MCF 10A (cell line): ENCODE measurements at regions of chr2 and their contacts with region 1.

Region 1: GRCh38 chr2:206800506-206801417 is 35.4 kb downstream of the FASTKD2 start:
- DNase-seq: peak; percentile 84
- H3K4me3 Mint-ChIP-seq: no peak overlapping the region
- H3K27ac Mint-ChIP-seq: no peak overlapping the region
- H3K4me1 Mint-ChIP-seq: no peaks in the 10 kb centered on the region
- H3K27me3 Mint-ChIP-seq: no peaks in the 10 kb centered on the region
- CTCF ChIP-seq: peak; percentile 76

Region 2: GRCh38 chr2:206274434-206275268 is 526.1 kb before region 1 on chr2 and contains the start of gene ZDBF2:
- CTCF ChIA-PET with region 1: no interaction called
- POLR2A ChIA-PET with region 1: no interaction called
- intact Hi-C with region 1: no loop called
- DNase-seq: peak; percentile 52
- H3K4me3 Mint-ChIP-seq: peak within 1 kb of the TSS; percentile 76
- H3K27ac Mint-ChIP-seq: peak within 1 kb of the TSS; percentile 89
- H3K4me1 Mint-ChIP-seq: no peaks in the 10 kb centered on the region
- H3K27me3 Mint-ChIP-seq: no peaks in the 10 kb centered on the region
- CTCF ChIP-seq: no peak
- total RNA-seq, gene ZDBF2: 15.6 and 21.3 TPM in 2 replicates

Region 3: GRCh38 chr2:206408323-206409320 is 392.1 kb before region 1 on chr2:
- CTCF ChIA-PET with region 1: no interaction called
- POLR2A ChIA-PET with region 1: no interaction called
- intact Hi-C with region 1: no loop called
- DNase-seq: no peak
- H3K4me3 Mint-ChIP-seq: no peak overlapping the region
- H3K27ac Mint-ChIP-seq: no peak overlapping the region
- H3K4me1 Mint-ChIP-seq: no peaks in the 10 kb centered on the region
- H3K27me3 Mint-ChIP-seq: no peaks in the 10 kb centered on the region
- CTCF ChIP-seq: no peak

Region 4: DNA sequence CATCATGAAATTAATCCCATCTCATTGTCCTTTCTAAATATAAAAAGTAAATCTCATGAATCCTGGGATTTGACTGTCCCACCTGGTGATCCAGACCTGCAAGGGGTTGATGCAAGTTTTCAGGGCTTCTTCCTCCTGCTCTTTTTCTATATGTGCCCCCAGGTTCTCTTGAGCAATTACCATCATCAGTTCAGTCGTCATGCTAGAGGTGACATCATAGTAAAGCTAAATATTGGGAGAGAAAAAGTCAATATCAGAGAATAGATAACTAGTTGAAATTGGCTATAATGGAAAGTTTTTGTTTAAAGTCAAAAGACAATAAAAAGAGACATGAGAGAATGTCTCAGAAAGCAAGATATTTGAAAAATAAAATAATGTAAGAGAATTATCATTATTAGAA is 43.9 kb before region 1 on chr2:
- CTCF ChIA-PET with region 1: no interaction called
- POLR2A ChIA-PET with region 1: no interaction called
- intact Hi-C with region 1: no loop called
- DNase-seq: no peak
- H3K4me3 Mint-ChIP-seq: no peak overlapping the region
- H3K27ac Mint-ChIP-seq: no peak overlapping the region
- H3K4me1 Mint-ChIP-seq: no peaks in the 10 kb centered on the region
- H3K27me3 Mint-ChIP-seq: peaks cover 5% of the 10 kb centered on the region
- CTCF ChIP-seq: no peak

Region 5: DNA sequence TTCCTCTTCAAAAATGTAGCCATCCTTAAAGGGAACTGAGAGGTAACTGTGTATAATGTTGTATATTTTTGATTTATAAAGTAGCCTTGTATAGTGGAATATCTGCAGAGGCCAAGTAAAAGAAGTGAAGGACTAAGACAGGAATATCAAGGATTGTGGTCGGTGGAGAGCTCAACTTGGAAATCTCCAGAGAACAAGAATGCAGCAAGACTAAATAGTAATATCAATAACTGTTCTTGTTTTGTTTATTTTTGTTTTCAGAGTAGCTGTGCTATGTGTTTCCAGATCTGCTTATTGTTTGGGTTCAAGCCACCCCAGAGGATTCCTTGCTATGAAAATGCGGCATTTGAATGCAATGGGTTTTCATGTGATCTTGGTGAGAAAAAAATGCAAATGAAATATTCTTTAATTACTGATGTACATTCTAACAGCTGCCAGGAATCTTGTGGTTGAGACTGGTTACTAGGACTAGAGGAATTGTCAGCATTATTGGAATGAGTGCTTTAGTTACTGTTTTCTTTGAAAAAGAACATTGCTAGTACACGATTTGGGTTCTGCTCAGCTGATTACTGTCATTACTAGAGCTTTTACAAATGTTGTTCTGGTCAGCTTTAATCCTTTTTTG is 10.3 kb before region 1 on chr2:
- CTCF ChIA-PET with region 1: interaction called, 24 read pairs
- POLR2A ChIA-PET with region 1: interaction called, 7 read pairs
- intact Hi-C with region 1: no loop called
- DNase-seq: no peak
- H3K4me3 Mint-ChIP-seq: no peak overlapping the region
- H3K27ac Mint-ChIP-seq: peak overlapping the region; percentile 3
- H3K4me1 Mint-ChIP-seq: no peaks in the 10 kb centered on the region
- H3K27me3 Mint-ChIP-seq: no peaks in the 10 kb centered on the region
- CTCF ChIP-seq: no peak

Region 6: GRCh38 chr2:206958261-206958660 is 157.5 kb after region 1 on chr2:
- CTCF ChIA-PET with region 1: no interaction called
- POLR2A ChIA-PET with region 1: no interaction called
- intact Hi-C with region 1: no loop called
- DNase-seq: no peak
- H3K4me3 Mint-ChIP-seq: no peak overlapping the region
- H3K27ac Mint-ChIP-seq: no peak overlapping the region
- H3K4me1 Mint-ChIP-seq: no peaks in the 10 kb centered on the region
- H3K27me3 Mint-ChIP-seq: no peaks in the 10 kb centered on the region
- CTCF ChIP-seq: no peak

Region 7: DNA sequence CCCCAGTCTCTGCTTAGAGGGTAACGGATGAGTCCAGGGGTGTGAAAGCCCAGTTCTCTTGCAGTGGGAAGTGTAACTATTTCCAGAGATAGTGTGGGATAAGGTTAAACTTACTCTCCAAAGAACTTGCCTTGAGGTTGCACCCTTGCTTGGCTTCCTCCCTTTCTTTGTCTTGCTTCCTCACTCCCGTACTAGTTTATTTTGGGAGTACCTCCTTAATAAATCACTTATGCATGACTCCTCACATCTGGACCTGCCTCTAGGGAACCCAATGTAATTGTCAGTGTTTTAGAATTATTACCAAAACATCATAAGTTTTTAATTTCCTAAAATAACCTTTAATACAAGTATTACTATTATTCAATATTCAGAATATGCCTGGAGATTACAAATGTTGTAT is 173.8 kb after region 1 on chr2:
- CTCF ChIA-PET with region 1: interaction called, 18 read pairs
- POLR2A ChIA-PET with region 1: no interaction called
- intact Hi-C with region 1: no loop called
- DNase-seq: no peak
- H3K4me3 Mint-ChIP-seq: no peak overlapping the region
- H3K27ac Mint-ChIP-seq: no peak overlapping the region
- H3K4me1 Mint-ChIP-seq: peaks cover 10% of the 10 kb centered on the region
- H3K27me3 Mint-ChIP-seq: no peaks in the 10 kb centered on the region
- CTCF ChIP-seq: no peak

Region 8: DNA sequence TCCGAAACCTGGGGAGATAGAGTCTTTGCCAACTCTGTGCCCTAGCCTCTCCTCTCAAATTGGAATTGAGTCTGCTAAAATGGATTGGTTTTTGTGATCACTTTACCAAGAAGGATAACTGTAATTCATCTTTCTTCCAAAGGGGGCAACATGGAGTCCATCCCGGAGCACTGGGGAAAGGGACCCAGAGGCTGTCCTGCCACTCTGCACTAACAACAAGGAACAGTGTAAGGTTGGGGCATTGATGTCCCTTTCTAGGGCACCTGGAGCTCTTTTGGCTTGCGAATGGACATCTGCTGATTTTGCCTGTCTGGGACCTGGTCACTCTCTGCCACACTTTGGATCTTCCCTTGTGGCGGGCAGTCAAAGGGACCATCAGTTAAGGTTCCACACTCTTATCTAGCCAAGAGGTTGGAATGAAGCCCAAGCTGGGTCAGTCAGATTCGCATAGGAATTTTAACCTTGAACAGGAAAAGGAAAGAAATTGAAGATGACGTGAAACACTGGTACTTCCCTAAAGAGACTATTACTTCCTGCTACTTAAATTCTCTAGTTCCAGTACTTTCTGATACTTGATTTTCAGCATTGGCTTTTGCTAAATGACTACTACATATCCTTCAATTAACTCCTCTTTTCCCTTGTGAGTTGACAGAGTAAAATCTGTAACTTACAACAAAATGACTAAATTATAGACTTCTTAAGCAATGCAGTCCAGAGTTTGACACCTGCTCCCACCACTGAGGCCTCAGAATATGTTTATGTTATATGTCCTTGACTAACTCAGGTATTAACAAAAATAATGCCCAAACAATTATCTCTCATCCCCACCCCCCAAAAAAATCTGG is 429.7 kb after region 1 on chr2:
- CTCF ChIA-PET with region 1: no interaction called
- POLR2A ChIA-PET with region 1: no interaction called
- intact Hi-C with region 1: loop called (anchors 10 kb)
- DNase-seq: peak; percentile 27
- H3K4me3 Mint-ChIP-seq: no peak overlapping the region
- H3K27ac Mint-ChIP-seq: no peak overlapping the region
- H3K4me1 Mint-ChIP-seq: peaks cover 2% of the 10 kb centered on the region
- H3K27me3 Mint-ChIP-seq: no peaks in the 10 kb centered on the region
- CTCF ChIP-seq: peak; percentile 25